ENCODE measurements at regions of chr3 and their contacts with region 1.

Region 1: GRCh38 chr3:48439820-48440589 is at the starts of genes CCDC51 and TMA7:
- DNase-seq: peak; percentile 98
- H3K4me3 Mint-ChIP-seq: peak within 1 kb of the TSS; percentile 98
- H3K27ac Mint-ChIP-seq: peak within 1 kb of the TSS; percentile 94
- H3K4me1 Mint-ChIP-seq: peaks cover 26% of the 10 kb centered on the region
- H3K27me3 Mint-ChIP-seq: no peaks in the 10 kb centered on the region
- total RNA-seq, gene CCDC51: 26.0 and 26.3 TPM in 2 replicates
- total RNA-seq, gene TMA7: 262 and 266 TPM in 2 replicates

Region 2: GRCh38 chr3:48194446-48195071 is 245.4 kb before region 1 on chr3:
- intact Hi-C with region 1: loop called (anchors 1 kb)
- DNase-seq: no peak
- H3K4me3 Mint-ChIP-seq: no peak overlapping the region
- H3K27ac Mint-ChIP-seq: no peak overlapping the region
- H3K4me1 Mint-ChIP-seq: no peaks in the 10 kb centered on the region
- H3K27me3 Mint-ChIP-seq: peaks cover 15% of the 10 kb centered on the region

Region 3: GRCh38 chr3:48240711-48241491 is 199.1 kb before region 1 on chr3 and contains the start of gene ZNF589:
- intact Hi-C with region 1: loop called (anchors 1 kb)
- DNase-seq: peak; percentile 93
- H3K4me3 Mint-ChIP-seq: peak within 1 kb of the TSS; percentile 91
- H3K27ac Mint-ChIP-seq: peak within 1 kb of the TSS; percentile 95
- H3K4me1 Mint-ChIP-seq: peaks cover 19% of the 10 kb centered on the region
- H3K27me3 Mint-ChIP-seq: no peaks in the 10 kb centered on the region
- total RNA-seq, gene ZNF589: 33.0 and 34.2 TPM in 2 replicates

Region 4: DNA sequence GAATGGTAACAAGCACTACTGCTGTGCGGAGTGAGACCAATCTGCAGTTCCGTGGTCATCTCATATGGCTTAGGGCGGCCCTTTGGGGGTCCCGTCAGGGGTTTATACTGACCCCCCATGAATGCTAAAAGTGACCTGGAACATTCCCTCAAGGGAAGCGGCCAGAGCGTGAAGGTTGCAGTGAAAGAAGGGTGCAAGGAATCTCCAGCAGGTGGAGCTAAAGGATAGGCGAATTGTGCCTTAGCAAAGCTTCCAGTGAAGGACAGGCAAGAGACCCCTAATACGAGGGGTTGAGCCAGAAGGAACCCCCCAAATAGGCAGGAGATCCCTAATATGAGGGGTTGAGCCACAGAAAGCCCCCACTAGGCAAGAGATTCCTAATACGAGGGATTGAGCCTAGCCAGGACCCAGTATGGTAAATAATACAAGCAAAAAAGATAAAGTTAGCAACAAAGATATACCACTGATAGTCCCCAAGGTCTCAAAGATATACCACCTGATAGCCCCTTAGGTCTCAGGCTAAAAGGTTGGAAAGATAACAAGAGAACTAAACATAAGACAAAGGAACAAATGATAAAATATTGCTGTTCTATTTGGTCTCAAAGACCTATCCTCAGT is 166.3 kb before region 1 on chr3:
- intact Hi-C with region 1: loop called (anchors 1 kb)
- DNase-seq: peak; percentile 35
- H3K4me3 Mint-ChIP-seq: no peak overlapping the region
- H3K27ac Mint-ChIP-seq: no peak overlapping the region
- H3K4me1 Mint-ChIP-seq: peaks cover 35% of the 10 kb centered on the region
- H3K27me3 Mint-ChIP-seq: no peaks in the 10 kb centered on the region

Region 5: GRCh38 chr3:48472915-48473616 is 33.1 kb after region 1 on chr3:
- intact Hi-C with region 1: loop called (anchors 5 kb)
- DNase-seq: peak; percentile 94
- H3K4me3 Mint-ChIP-seq: peak overlapping the region; percentile 82
- H3K27ac Mint-ChIP-seq: peak overlapping the region; percentile 95
- H3K4me1 Mint-ChIP-seq: peaks cover 64% of the 10 kb centered on the region
- H3K27me3 Mint-ChIP-seq: no peaks in the 10 kb centered on the region

Region 6: DNA sequence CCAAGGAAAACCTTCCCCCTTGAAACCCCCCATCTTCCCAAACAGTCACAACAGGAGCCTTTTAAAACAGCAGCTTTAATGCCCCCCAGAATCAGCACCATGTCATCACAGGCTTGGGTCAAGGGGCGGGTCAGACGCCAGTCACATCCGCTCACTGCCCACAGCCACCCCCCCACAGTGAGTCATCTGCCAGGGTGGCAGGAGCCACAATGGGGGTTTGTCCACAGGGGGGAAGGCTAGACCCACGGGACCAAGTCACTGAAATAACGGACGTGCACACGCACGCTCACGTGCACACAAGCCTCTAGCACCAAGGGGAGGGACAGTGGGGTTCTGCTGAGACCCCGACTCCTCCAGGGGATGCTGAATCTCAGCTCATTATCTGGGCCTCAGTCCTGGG is 124.0 kb after region 1 on chr3:
- intact Hi-C with region 1: no loop called
- DNase-seq: no peak
- H3K4me3 Mint-ChIP-seq: no peak overlapping the region
- H3K27ac Mint-ChIP-seq: no peak overlapping the region
- H3K4me1 Mint-ChIP-seq: no peaks in the 10 kb centered on the region
- H3K27me3 Mint-ChIP-seq: no peaks in the 10 kb centered on the region

Region 7: DNA sequence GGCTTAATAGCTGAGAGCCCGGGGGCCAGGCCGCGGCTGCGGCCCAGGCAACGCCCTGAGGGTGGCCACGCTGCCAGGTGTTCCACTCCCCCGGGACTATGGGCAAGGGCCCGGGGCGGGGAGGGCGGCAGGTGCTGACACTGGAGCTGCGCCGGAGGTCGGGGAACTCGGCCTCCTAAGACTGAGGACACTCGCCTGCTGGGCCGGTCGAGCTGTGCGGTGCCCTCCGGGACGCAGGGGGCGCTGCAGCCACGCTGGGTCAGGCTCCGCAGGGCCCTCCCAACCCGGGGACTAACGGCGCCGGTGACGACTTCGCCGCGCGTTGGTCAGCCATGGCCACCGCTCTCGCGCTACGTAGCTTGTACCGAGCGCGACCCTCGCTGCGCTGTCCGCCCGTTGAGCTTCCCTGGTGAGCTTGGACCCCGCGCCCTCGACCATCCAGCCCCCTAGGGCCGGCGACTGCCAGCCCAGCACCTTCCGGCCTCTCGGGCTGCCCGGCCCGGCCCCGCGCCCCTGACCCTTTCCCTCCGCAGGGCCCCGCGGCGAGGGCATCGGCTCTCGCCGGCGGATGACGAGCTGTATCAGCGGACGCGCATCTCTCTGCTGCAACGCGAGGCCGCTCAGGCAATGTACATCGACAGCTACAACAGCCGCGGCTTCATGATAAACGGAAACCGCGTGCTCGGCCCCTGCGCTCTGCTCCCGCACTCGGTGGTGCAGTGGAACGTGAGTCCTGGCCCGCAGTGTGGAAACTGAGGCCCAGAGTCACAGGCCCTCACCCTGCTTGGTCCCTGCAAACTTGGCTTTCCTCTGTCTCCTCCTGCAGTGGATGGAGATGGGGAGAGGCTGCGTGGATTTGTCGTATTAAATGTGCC is 582.0 kb after region 1 on chr3 and contains the start of gene NDUFAF3:
- intact Hi-C with region 1: loop called (anchors 10 kb)
- DNase-seq: peak; percentile 91
- H3K4me3 Mint-ChIP-seq: peak within 1 kb of the TSS; percentile 91
- H3K27ac Mint-ChIP-seq: peak within 1 kb of the TSS; percentile 99
- H3K4me1 Mint-ChIP-seq: peaks cover 41% of the 10 kb centered on the region
- H3K27me3 Mint-ChIP-seq: no peaks in the 10 kb centered on the region
- total RNA-seq, gene NDUFAF3: 126 and 129 TPM in 2 replicates

Measured in activated T-helper 1 cell treated with anti-CD3 and anti-CD28 coated beads, Interleukin-12 subunit alpha, Interleukin-12 subunit beta, Interleukin-2, Interleukin-4 antibody, amounts not matched to agents 30 ng/mL and 10 ng/mL and 1 ng/mL, durations not matched to agents 14 hours and 24 hours and 36 hours (primary cell).